Aorta (tissue), 5 donors: ENCODE measurements at regions of chr5 and their contacts with region 1.

Region 1: DNA sequence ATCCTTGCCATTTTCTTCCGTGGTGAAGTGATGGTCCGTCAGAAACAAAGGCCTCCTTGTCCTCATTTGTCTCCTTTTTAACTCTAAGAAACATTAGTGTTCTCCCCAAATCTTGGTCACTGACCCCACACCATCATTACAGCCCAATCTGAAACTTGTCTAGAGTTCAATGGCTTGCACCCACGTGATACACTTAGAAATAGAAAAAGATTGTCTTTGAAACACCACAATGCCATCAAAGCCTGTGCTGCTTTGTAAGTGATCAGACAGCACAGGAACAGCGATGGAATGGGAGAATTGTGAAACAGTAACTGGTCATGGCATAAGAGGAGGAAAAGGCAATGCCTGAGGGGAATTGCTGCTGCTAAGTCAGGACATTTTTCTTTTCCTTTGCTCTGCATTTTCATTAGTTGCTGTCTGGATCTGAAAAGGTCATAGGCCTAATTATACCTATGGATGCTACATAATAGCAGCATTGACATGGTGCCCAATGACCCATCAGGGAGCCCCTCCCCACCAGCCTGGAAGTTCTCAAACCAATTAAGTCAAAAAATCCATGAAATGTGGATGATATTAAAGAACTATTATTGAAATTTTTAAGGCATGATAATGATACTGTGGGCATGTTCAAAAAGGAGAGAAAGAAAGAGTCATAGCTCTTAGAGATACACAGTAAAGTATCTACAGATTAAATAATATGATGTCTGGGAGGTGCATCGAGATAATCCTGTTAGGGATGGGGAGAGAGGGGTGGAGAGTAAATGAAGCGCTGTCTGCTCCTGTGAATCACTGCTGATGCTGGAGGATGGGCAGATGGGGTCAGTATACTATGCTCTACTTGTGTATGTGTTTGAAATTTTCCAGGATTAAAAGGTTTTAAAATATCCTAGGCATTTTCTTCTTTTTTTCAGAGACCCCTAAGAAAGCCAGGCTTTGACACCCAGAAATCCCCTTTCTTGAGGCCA is 83.6 kb downstream of the ENC1 start:
- DNase-seq: no peak
- ATAC-seq: no peak
- H3K4me3 ChIP-seq: no peak overlapping the region
- H3K27ac ChIP-seq: no peak overlapping the region
- H3K4me1 ChIP-seq: no peaks in the 10 kb centered on the region
- H3K27me3 ChIP-seq: no peaks in the 10 kb centered on the region

Region 2: DNA sequence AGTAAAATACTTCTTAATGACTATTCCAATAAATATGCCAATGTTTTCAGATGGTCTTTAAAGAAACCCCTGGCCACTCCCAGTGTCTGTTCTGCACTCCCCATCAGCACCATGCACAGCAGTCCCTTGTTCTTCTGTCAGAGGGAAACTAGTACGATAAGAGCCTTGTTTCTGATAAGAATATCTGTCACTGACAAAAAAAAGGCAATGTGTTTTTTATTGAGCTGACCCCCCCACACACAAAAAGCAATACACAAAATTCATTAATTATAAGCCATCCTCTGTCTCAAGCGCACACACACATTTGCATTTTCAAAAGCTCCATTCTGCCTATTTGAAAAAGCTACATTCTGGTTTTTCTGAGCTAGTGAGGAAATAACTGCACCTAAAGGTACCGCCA is 35.5 kb before region 1 on chr5:
- intact Hi-C with region 1: loop called in 1 of 2 experiments (anchors 5 kb)
- DNase-seq: no peak
- ATAC-seq: no peak
- H3K4me3 ChIP-seq: no peak overlapping the region
- H3K27ac ChIP-seq: no peak overlapping the region
- H3K4me1 ChIP-seq: no peaks in the 10 kb centered on the region
- H3K27me3 ChIP-seq: no peaks in the 10 kb centered on the region

Region 3: DNA sequence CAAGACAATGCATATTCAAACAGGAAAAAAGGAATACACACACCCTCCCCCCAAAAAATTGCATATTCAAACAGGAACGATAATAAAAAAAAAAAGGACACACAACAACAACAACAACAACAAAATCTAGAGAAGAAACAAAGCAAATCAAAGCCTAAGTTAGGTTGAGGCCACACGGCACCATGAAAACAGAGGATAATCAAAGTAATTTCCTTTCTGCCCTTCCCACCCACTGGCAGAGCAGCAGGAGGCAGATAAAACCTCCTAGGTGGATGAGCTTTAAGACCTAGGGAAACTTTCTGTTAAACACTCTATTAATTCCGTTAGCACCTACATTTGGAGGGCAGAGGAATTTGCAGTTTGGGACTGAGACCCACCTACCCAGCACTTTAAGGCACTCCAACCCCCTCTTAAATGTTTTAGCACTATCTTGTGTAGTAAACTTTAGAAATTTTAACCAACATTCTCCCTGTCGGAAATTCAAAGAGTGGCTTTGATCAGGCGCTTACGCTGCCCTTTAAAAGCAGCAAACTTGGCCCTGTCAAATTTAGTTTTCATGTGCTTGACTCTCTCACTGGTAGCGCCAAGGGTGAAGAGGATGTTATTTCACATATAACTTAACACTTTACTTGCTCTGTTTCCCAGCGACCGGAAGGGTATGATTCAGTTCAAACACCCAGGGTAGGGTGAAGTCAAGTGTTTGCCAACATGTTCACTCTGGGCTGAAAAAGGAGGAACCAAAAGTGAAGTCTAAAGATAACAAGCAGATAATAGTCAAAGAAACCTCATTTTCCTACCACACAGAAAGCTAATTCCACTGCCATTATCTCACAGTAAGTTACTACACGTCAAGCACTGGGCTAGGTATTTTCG is 74.4 kb after region 1 on chr5:
- intact Hi-C with region 1: no loop called
- DNase-seq: no peak
- ATAC-seq: no peak
- H3K4me3 ChIP-seq: no peak overlapping the region
- H3K27ac ChIP-seq: no peak overlapping the region
- H3K4me1 ChIP-seq: no peaks in the 10 kb centered on the region
- H3K27me3 ChIP-seq: no peaks in the 10 kb centered on the region